ENCODE measurements at regions of chr17 and their contacts with region 1.

Region 1: GRCh38 chr17:78176548-78177025 is 8.2 kb downstream of the SYNGR2 start:
- DNase-seq: peak; percentile 78
- CTCF ChIP-seq: peak; percentile 98

Region 2: GRCh38 chr17:78103311-78103710 is 73.3 kb before region 1 on chr17:
- CTCF ChIA-PET with region 1: no interaction called
- POLR2A ChIA-PET with region 1: no interaction called
- DNase-seq: no peak
- CTCF ChIP-seq: no peak

Region 3: DNA sequence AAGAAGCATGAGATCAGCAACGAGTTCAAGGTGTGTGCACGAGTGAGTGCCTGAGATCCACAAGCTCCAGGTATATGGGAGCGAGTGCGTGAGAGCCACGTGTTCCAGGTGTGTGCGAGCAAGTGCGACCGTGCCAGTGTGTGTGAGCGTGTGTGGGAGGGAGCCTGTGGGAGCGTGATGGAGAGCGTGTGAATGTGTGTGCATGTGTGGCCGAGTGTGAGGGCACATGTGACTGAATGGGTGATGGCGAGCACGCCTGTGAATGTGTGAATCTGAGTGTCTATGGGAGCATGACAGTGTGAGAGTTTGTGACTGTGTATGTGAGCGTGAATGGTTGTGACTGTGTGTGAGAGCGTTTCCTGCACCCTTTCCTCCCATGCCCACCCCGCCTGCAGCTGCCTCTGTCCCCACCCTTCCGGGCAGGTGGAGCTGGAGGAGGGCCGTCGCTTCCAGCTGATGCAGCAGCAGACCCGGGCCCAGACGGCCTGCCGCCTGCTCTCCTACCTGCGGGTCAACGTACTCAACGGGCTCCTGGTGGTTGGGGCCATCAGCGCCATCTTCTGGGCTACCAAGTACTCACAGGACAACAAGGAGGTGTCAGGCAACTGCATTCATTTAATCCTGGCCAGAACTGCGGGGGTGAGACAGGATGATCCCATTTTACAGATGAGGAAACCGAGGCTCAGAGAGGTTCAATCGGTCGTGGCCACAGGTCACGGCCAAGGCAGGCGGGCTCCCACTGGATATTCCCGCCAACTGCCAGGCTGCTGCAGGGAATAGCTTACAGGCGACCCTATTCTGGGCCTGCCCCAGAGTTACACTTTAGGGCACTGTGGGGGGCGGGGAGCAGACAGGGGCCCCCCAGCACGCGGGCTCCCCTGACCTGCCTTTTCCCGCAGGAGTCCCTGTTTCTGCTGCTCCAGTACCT is 42.4 kb before region 1 on chr17:
- CTCF ChIA-PET with region 1: interaction called, 48 read pairs
- POLR2A ChIA-PET with region 1: interaction called, 4 read pairs
- DNase-seq: peak; percentile 72
- CTCF ChIP-seq: peak; percentile 72

Region 4: GRCh38 chr17:78147315-78147998 is 29.1 kb before region 1 on chr17:
- CTCF ChIA-PET with region 1: interaction called, 31 read pairs
- POLR2A ChIA-PET with region 1: interaction called, 5 read pairs
- DNase-seq: peak; percentile 60
- CTCF ChIP-seq: no peak

Region 5: GRCh38 chr17:78186692-78187595 is 10.4 kb after region 1 on chr17 and contains the starts of genes AFMID and TK1:
- CTCF ChIA-PET with region 1: interaction called, 50 read pairs
- POLR2A ChIA-PET with region 1: interaction called, 6 read pairs
- DNase-seq: peak; percentile 99
- CTCF ChIP-seq: peak; percentile 36

Region 6: DNA sequence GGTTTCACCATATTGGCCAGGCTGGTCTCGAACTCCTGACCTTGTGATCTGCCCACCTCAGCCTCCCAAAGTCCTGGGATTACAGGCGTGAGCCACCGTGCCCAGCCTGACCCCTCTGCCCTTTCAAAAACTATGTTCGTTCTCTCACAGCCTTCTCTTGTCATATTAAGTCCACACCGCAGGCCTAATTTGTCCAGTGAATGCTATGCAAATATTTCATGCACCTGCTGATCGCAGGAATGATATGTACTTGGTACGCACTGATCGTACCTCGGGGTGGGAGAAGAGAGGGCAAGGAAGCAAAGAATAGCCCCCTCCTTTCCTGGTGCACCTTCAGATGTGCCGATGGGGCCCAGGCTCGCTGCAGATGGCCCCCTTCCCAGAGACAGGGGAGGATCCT is 34.5 kb after region 1 on chr17:
- CTCF ChIA-PET with region 1: no interaction called
- POLR2A ChIA-PET with region 1: no interaction called
- DNase-seq: no peak
- CTCF ChIP-seq: no peak

Region 7: DNA sequence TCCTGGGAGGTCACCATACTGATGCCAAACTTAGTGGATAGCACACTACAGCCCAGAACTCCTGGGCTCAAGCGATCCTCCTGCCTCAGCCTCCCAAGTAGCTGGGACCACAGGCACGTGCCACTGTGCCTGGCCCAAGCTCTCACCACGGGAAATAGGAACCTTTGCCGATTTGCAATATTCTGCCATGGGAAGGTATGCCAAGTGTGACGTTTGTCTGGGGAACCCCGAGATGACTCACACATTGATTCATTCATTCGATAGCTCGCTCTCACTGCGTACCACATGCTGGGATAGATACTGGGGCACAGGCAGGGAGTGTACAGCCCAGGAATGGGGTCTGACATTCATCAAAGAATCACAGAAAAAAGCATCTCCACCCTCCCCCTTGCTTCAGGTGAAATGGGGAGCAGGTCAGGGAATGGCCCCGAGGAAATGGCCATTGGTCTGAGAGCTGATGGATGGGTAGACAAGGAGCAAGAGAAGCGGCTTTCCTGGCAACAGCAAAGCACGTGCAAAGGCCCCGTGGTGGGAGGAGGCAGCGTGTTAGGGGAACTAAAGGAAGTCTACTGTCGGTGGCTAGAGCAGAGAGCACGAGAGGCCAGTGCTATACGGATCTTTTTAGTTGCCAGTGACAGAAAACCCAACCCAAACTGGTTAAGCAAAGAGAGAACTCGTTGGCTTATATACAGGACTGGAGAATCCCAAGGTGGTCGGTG is 356.5 kb after region 1 on chr17:
- CTCF ChIA-PET with region 1: no interaction called
- POLR2A ChIA-PET with region 1: no interaction called
- DNase-seq: no peak
- CTCF ChIP-seq: no peak